Activated T-helper 2 cell treated with anti-CD3 and anti-CD28 coated beads, Interferon-gamma antibody, Interleukin-2, Interleukin-4, amounts not matched to agents 10 μg/mL and 5 μg/mL and 100 μg/mL, durations not matched to agents 14 hours and 24 hours and 36 hours (primary cell): ENCODE measurements at regions of chr18 and their contacts with region 1.

Region 1: DNA sequence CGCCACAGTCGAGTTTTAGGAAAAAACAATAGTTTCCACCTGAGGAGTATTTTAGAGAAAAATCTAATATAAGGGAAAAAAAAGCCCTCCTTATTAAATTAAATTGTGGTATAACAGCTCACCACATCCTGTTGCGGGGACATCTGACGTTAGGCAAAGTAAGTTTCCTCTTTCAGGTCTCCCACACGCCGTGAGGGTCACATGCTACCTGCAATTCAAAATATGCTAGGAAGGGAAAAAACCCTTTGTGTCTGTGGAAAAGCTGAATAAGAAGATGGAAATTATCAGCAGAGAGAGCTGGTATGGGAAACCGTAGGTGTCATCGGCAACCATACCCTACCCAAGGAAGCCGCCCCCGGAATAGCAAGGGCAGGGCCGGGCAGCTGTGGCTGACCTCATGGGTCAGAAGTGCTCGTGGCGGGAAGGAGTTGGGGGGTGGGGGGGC is 128.0 kb downstream of the NFATC1 start:
- DNase-seq: peak; percentile 66
- H3K4me3 Mint-ChIP-seq: peak overlapping the region; percentile 77
- H3K27ac Mint-ChIP-seq: peak overlapping the region; percentile 98
- H3K4me1 Mint-ChIP-seq: peaks cover 56% of the 10 kb centered on the region
- H3K27me3 Mint-ChIP-seq: no peaks in the 10 kb centered on the region

Region 2: DNA sequence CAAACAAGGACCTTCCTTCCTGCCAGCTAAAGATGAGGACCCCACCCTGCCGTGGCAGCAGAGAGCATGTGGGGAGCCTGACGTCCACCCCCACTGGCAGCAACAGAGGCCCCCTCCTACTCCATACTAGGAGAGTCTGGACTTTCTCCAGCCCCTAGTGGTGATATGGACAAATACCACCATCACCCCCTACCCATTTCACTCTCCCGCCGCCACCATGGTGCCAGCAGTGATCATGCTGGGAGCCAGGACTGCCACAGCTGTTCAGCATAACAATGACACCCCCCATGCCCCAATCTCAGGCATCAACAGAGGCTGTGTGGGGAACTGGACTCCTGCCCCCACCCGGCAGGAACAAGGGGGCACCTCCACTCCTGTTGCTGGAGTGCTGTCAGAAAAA is 497.3 kb before region 1 on chr18:
- intact Hi-C with region 1: no loop called
- DNase-seq: no peak
- H3K4me3 Mint-ChIP-seq: no peak overlapping the region
- H3K27ac Mint-ChIP-seq: no peak overlapping the region
- H3K4me1 Mint-ChIP-seq: no peaks in the 10 kb centered on the region
- H3K27me3 Mint-ChIP-seq: no peaks in the 10 kb centered on the region

Region 3: DNA sequence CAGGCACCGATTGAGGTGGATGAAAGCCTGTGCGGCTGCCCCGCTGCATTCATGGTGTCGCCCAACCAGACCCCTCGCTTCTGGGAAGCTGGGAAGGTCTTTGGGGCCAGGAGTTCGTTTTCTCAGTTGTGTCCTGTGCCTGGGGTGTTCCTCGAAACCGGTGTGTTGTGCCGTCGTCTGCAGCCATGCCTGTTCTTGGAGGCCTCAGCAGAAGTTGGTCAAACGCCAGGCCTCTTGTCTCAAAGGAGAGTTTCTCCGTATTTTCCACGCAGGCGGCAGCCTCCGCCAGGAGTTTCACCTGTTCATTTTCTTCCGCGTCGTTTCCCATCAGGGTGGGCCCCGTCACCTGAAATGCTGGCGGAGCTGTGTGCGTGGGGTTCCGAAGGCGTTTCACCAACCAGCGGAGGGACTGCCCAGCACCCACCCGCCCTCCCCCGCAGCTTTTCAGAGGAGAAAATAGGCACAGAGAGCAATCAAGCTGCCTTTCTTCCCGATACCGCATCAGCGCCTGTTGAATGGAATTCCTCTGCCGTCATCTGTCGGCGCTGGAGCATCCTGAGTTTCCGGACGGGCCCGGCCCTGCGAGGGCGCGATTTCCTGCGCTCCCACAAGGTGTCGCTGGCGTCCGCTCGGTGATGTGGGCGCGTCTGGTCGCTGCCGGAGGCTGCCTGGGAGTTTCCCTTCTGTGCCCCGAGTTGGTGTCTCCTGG is 145.1 kb before region 1 on chr18:
- intact Hi-C with region 1: loop called (anchors 1 kb)
- DNase-seq: peak; percentile 71
- H3K4me3 Mint-ChIP-seq: no peak overlapping the region
- H3K27ac Mint-ChIP-seq: no peak overlapping the region
- H3K4me1 Mint-ChIP-seq: peaks cover 11% of the 10 kb centered on the region
- H3K27me3 Mint-ChIP-seq: no peaks in the 10 kb centered on the region

Region 4: DNA sequence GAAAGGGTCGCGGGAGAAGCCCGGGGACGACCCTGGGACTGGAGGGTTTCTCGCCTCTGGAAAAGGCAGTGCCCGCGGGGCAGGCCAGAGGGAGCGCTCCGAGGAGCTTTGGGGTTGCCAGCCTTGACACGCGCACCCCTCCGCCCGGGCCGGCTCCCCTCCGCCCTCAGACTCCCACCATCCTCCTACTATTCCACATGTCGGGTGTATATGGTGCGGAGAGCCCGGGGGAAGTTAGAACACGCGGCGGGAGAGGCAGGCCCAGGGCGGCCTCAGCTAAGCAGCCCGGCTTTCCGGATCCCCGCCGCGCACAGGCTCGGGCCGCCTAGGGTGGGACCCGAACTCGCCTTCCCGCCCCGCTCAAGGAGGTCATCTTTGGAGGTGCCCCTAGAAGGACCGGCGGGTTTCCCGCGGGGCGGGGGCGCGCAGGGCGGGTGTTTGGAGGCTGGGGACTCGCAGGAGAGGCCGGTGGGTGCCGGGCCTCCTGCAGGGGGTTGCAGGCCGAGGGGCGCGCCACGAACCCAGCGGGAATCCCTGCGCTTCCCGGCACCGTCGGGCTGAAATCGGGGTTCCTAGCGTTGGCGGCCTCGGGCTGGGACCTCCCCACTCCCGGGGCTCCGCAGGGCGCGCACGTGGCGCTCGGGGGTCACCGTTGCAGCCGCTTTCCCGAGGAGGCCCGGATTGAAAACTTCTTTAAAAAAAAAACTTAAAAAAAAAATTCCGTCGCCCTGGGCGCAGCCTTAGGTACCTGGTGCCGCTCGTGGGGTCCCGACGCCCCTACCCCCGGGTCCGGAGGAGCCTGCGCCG is 124.3 kb before region 1 on chr18:
- intact Hi-C with region 1: loop called (anchors 1 kb)
- DNase-seq: no peak
- H3K4me3 Mint-ChIP-seq: peak overlapping the region; percentile 89
- H3K27ac Mint-ChIP-seq: peak overlapping the region; percentile 94
- H3K4me1 Mint-ChIP-seq: peaks cover 43% of the 10 kb centered on the region
- H3K27me3 Mint-ChIP-seq: no peaks in the 10 kb centered on the region

Region 5: DNA sequence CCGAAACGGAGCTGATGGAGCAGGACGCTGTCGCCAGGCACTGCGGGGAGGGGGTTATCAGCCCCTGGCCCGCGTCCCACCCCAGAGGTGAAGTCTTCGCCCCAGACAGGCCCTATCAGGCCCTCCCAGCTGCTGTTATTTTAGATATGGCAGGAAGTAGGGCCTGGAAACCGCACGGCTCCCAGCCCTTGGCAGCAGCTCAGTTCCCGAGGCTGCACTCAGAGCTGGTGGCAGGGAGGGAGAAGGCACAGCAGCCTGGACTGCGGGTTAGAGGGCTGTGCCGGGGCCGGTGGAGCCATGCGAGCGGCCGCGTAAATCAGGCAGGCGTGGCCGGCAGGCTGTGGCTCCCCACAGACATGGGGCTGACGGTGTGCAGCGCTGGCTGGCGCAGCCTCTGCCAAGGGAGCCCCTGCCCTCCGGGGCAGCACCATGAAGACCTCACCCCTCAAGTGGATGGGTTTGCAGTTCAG is 16.6 kb before region 1 on chr18:
- intact Hi-C with region 1: loop called (anchors 1 kb)
- DNase-seq: no peak
- H3K4me3 Mint-ChIP-seq: peak overlapping the region; percentile 5
- H3K27ac Mint-ChIP-seq: peak overlapping the region; percentile 80
- H3K4me1 Mint-ChIP-seq: peaks cover 47% of the 10 kb centered on the region
- H3K27me3 Mint-ChIP-seq: no peaks in the 10 kb centered on the region

Region 6: GRCh38 chr18:79905389-79905911 is 381.7 kb after region 1 on chr18:
- intact Hi-C with region 1: loop called (anchors 5 kb)
- DNase-seq: no peak
- H3K4me3 Mint-ChIP-seq: no peak overlapping the region
- H3K27ac Mint-ChIP-seq: peak overlapping the region; percentile 90
- H3K4me1 Mint-ChIP-seq: peaks cover 18% of the 10 kb centered on the region
- H3K27me3 Mint-ChIP-seq: no peaks in the 10 kb centered on the region